Prostate gland (tissue), 2 donors: ENCODE measurements at regions of chr13 and their contacts with region 1.

Region 1: DNA sequence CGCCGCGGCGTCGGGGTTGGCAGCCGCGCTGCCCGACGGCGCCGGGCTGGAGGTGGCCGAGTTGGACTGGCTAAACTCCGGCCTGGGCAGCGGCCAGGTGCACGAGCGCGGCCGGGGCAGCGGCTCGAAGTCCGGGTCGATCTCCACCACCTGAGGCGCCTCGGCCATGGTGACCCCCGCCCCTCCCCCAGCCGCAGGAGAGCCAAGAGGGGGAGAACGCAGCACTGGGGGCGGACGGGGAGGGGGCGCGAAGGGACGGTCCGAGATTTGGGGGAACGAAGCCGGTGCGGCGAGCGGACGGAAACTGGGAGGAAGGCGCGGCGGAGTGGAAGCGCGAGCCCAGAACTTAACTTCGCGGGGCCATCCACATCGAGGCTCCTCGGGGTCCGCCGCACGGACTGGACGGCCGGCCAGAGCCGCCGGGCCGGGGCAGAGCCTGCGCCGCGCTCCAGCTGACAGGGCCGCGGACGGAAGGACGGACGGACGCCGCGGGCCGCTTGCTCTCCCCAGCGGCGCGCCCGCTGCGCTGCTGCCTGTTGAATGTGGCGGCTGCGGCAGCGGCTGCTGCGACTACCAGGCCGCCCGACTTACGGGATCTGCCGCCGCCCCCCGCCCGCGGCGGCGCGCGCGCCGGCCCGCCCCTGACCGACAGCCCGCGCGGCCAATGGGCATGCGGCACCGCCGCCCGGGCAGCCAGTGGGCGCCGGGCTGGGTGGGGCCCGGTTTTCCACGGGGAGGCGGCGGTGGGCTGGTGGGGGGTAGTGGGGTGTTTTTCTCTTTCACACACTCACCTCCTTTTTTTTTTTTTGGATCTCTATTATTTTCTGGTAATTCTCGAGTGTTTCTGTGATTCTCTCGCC is at the start of gene FOXO1:
- DNase-seq: peak; percentile 88
- H3K4me3 ChIP-seq: peak within 1 kb of the TSS; percentile 89 to 96
- H3K27ac ChIP-seq: peak within 1 kb of the TSS; percentile 97 to 98
- H3K4me1 ChIP-seq: no peaks in the 10 kb centered on the region
- H3K27me3 ChIP-seq: no peaks in the 10 kb centered on the region
- CTCF ChIP-seq: peak in 2 of 4 experiments; percentile 12 to 18
- POLR2A ChIP-seq: peak; percentile 95
- total RNA-seq, gene FOXO1: 23.5 to 46.1 TPM

Region 2: DNA sequence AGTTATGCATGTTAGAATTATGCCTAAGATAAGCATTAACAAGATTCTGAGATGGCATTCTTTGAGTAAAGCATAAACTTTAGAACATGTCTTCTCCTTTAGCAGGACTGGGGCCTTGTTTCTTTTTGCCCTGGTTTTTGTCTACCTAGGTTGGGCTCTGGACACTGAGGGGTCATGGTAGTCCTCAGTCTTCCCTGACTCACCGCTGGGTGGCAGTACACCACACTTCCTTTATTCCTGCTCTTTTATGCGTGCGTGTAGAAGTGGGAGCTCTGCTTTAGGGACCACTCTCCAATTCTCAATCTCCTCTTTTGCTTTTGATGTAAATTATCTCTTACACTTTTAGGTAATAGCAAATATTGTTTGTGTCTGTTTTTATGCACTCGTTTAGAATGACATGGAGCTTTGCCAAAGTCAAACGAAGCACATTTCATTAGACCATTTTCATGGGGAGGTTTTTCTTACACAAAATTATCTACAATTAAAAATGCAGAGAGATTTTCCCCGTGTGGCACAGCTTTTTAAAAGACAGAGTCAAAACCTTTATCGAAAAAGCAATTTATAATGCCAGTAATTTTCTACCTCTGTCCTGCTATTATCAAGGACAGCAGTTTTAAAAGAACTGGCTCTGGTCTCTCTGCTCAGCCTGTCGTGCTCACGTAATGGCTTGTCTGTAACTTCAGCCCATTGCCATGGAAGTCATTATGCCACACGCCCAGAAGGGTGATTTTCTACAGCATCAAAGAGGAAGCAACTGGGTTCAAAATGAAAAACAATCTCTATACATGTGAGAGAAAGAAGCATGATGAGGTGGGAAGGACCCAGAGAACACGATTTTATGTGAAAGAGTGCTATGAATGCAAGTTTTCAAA is 596.9 kb before region 1 on chr13:
- intact Hi-C with region 1: loop called (anchors 5 kb)
- DNase-seq: peak; percentile 66
- H3K4me3 ChIP-seq: no peak overlapping the region
- H3K27ac ChIP-seq: no peak overlapping the region
- H3K4me1 ChIP-seq: no peaks in the 10 kb centered on the region
- H3K27me3 ChIP-seq: no peaks in the 10 kb centered on the region
- CTCF ChIP-seq: peak; percentile 64 to 89 (median 82)
- POLR2A ChIP-seq: no peak

Region 3: GRCh38 chr13:40130871-40131636 is 535.2 kb before region 1 on chr13:
- intact Hi-C with region 1: loop called (anchors 5 kb)
- DNase-seq: no peak
- H3K4me3 ChIP-seq: no peak overlapping the region
- H3K27ac ChIP-seq: no peak overlapping the region
- H3K4me1 ChIP-seq: no peaks in the 10 kb centered on the region
- H3K27me3 ChIP-seq: no peaks in the 10 kb centered on the region
- CTCF ChIP-seq: no peak
- POLR2A ChIP-seq: no peak

Region 4: GRCh38 chr13:40149611-40150274 is 516.5 kb before region 1 on chr13:
- intact Hi-C with region 1: loop called (anchors 5 kb)
- DNase-seq: peak; percentile 19
- H3K4me3 ChIP-seq: no peak overlapping the region
- H3K27ac ChIP-seq: peak overlapping the region; percentile 45 to 50
- H3K4me1 ChIP-seq: no peaks in the 10 kb centered on the region
- H3K27me3 ChIP-seq: no peaks in the 10 kb centered on the region
- CTCF ChIP-seq: no peak
- POLR2A ChIP-seq: no peak

Region 5: DNA sequence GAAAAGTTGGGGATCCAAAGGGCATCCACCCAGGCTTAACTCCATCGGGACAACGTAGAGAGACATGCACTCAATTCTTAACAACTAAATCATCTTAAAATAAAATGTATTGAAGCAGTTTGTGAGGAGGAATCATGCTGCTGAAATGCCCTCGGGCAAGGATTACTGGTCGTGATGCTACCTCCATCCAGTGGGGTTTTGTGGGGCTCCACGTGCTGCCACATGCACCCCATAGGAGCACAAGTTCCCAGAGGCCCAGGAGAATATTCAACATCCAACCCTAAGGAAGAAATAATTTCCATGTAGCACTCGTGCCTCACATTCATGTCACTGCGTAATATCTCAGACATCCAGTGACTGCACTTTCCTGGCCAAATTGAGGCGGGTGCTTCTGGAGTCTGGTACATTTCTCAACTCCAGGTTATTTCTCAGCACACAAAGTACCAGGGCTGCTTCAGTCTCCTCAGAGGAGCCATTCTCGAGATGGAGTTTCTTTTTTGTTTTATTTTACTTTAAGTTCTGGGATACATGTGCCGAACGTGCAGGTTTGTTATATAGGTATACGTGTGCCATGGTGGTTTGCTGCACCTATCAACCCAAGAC is 429.6 kb before region 1 on chr13:
- intact Hi-C with region 1: loop called (anchors 2 kb)
- DNase-seq: peak; percentile 28
- H3K4me3 ChIP-seq: no peak overlapping the region
- H3K27ac ChIP-seq: peak overlapping the region; percentile 73 to 79
- H3K4me1 ChIP-seq: no peaks in the 10 kb centered on the region
- H3K27me3 ChIP-seq: no peaks in the 10 kb centered on the region
- CTCF ChIP-seq: no peak
- POLR2A ChIP-seq: no peak

Region 6: GRCh38 chr13:40401911-40402776 is 264.1 kb before region 1 on chr13:
- intact Hi-C with region 1: loop called (anchors 5 kb)
- DNase-seq: peak; percentile 55
- H3K4me3 ChIP-seq: no peak overlapping the region
- H3K27ac ChIP-seq: peak overlapping the region; percentile 30 to 56
- H3K4me1 ChIP-seq: peaks cover 7% of the 10 kb centered on the region
- H3K27me3 ChIP-seq: no peaks in the 10 kb centered on the region
- CTCF ChIP-seq: no peak
- POLR2A ChIP-seq: no peak

Region 7: DNA sequence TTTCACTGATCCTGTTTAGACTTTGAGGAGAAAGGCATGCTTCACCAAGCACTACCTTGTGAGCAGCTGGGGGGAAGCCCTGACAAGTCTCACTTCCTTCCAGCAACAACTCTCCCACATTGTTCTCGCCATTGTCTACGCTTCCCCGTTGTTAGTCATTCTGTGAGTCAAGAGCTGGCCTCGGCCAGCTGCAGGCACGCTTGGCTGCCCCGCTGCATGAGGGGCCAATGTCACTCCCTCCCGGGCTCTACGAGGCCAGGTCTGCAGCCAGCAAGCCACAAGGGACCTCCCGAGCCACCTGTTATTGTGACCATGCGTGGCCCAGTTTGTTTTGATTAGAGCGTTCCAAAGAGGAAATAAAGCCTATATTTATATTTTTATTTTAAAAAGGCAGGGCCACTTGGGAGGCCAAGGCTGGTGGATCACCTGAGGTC is 220.7 kb before region 1 on chr13:
- intact Hi-C with region 1: loop called (anchors 10 kb)
- DNase-seq: no peak
- H3K4me3 ChIP-seq: no peak overlapping the region
- H3K27ac ChIP-seq: no peak overlapping the region
- H3K4me1 ChIP-seq: no peaks in the 10 kb centered on the region
- H3K27me3 ChIP-seq: no peaks in the 10 kb centered on the region
- CTCF ChIP-seq: no peak
- POLR2A ChIP-seq: no peak

Region 8: GRCh38 chr13:40770934-40771618 is 104.8 kb after region 1 on chr13 and contains the start of gene MRPS31:
- intact Hi-C with region 1: no loop called
- DNase-seq: peak; percentile 85
- H3K4me3 ChIP-seq: peak within 1 kb of the TSS; percentile 62 to 64
- H3K27ac ChIP-seq: peak within 1 kb of the TSS; percentile 82 to 87
- H3K4me1 ChIP-seq: peaks cover 2% of the 10 kb centered on the region
- H3K27me3 ChIP-seq: no peaks in the 10 kb centered on the region
- CTCF ChIP-seq: peak in 2 of 4 experiments; percentile 14 to 22
- POLR2A ChIP-seq: peak; percentile 64
- total RNA-seq, gene MRPS31: 19.2 to 19.9 TPM

Region 9: GRCh38 chr13:40908546-40908945 is 242.3 kb after region 1 on chr13:
- intact Hi-C with region 1: no loop called
- DNase-seq: no peak
- H3K4me3 ChIP-seq: no peak overlapping the region
- H3K27ac ChIP-seq: no peak overlapping the region
- H3K4me1 ChIP-seq: no peaks in the 10 kb centered on the region
- H3K27me3 ChIP-seq: no peaks in the 10 kb centered on the region
- CTCF ChIP-seq: no peak
- POLR2A ChIP-seq: no peak